BJ (cell line): ENCODE measurements at regions of chr6 and their contacts with region 1.

Region 1: GRCh38 chr6:35786810-35787209 is 6.0 kb downstream of the CLPSL1 start:
- DNase-seq: no peak
- H3K4me3 ChIP-seq: no peak overlapping the region
- H3K27me3 ChIP-seq: peaks cover 20% of the 10 kb centered on the region
- CTCF ChIP-seq: no peak

Region 2: DNA sequence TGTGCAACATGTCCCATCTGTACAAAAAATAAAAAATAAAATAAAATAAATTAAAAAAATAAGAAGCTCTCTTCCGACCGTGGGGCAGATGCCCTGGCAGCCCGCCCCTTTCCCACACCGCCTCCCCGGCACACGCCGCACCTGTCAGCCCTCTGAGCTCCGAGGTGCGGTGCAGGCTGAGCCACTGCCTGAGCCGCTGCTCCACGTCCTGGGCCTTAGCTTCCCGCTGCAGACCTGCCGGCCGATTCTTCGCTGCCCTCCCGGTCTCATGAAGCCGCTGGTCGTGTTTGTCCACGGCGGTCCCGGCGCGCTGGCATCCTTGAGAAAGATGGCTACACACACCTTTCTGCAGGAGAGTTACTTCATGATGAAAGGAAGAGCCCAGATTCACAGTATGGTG is 21.1 kb before region 1 on chr6:
- CTCF ChIA-PET with region 1: no interaction called
- POLR2A ChIA-PET with region 1: no interaction called
- DNase-seq: no peak
- H3K4me3 ChIP-seq: no peak overlapping the region
- H3K27me3 ChIP-seq: peaks cover 14% of the 10 kb centered on the region
- CTCF ChIP-seq: no peak

Region 3: DNA sequence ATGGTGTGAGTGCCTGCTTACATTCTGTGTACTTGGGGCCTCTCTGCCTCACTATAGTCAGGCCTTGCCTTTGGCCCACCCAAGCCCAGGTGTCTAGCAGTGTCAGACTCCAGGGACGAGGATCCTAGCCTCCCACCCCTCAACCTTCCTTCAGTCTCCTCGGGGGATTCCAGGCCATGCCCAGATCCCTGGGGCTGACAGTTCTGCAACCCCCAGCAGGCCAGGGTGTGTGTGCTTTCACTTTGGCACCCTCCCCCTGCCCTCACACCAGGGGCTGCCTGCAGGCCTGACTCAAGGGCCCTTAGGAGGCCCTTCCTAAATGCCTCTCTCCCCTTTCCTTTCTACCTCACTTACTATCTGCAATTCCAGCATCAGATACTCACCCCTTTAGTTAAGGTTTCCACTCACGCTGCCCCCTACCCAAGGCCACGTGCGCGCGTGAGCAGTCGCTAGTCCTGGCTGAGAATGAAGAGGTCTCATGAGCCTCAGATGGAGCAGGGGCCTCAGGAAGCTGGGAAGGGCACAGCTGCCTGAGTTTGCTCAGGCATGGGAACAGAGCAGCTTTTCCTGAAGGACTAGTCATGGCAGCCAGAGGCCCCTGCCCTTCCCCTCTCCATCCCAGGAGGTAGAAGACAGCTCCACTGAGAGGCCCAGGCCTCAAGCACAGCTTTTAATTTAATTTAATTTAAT is 11.2 kb after region 1 on chr6:
- CTCF ChIA-PET with region 1: interaction called, 10 read pairs
- POLR2A ChIA-PET with region 1: no interaction called
- DNase-seq: no peak
- H3K4me3 ChIP-seq: no peak overlapping the region
- H3K27me3 ChIP-seq: peaks cover 7% of the 10 kb centered on the region
- CTCF ChIP-seq: no peak